ENCODE measurements at regions of chr22 and their contacts with region 1.

Region 1: DNA sequence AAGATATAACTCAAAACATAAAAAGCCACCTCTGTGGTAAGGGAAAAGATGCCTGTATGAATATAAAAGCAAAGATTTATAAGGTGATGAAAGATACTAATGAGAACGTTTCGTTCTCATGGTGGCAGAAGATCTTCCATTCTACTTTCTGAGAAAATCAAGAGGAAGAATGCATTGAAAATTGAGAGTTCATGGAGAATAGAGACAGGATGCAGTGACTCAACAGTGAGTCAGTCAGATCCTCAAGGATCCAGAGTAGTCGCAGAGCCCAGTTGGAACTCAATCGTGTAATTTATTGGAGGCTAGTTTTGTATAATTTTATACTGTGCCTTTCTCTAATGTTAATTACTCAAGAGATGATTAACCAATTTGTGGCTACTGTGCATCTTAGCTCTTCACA is 73.3 kb downstream of the ENTHD1 start:
- DNase-seq: no peak
- ATAC-seq: no peak
- H3K4me3 ChIP-seq: no peak overlapping the region
- H3K27ac ChIP-seq: no peak overlapping the region
- H3K4me1 ChIP-seq: peaks cover 2% of the 10 kb centered on the region
- H3K27me3 ChIP-seq: no peaks in the 10 kb centered on the region
- CTCF ChIP-seq: no peak
- EP300 ChIP-seq: no peak
- POLR2A ChIP-seq: no peak
- RAD21 ChIP-seq: no peak

Region 2: DNA sequence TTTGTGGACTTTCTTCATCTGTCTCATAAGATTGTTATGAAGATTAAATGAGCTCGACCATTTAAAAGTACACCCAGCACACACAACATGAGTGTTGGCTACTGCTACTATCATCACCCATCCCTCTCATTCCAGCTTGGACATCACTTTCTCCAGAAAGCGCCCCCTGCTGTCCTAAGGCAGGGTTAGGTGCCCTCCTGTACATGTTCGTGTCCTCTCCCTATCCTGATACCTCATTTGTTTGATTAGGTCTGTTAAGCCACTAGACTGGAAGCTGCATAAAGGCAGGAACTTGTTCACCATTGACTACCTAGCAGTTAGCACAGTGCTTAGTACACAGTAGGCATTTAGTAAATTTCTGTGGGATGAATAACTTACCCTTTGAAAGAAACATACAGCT is 12.2 kb before region 1 on chr22:
- CTCF ChIA-PET with region 1: interaction called, 10 read pairs
- POLR2A ChIA-PET with region 1: no interaction called
- RAD21 ChIA-PET with region 1: no interaction called
- SMC1A ChIA-PET with region 1: interaction called, 3 read pairs
- in situ Hi-C with region 1: no loop called
- intact Hi-C with region 1: no loop called
- DNase-seq: no peak
- ATAC-seq: 0 out of 3 replicates have a peak, but pooled peaks have one; percentile 34
- H3K4me3 ChIP-seq: no peak overlapping the region
- H3K27ac ChIP-seq: no peak overlapping the region
- H3K4me1 ChIP-seq: peaks cover 11% of the 10 kb centered on the region
- H3K27me3 ChIP-seq: no peaks in the 10 kb centered on the region
- CTCF ChIP-seq: peak in 2 of 3 experiments; percentile 24 to 27; a peak in 1 of 6 replicates
- EP300 ChIP-seq: no peak
- POLR2A ChIP-seq: no peak
- RAD21 ChIP-seq: 0 out of 2 replicates have a peak, but pooled peaks have one; percentile 3

Region 3: GRCh38 chr22:39832627-39833074 is 12.4 kb after region 1 on chr22:
- CTCF ChIA-PET with region 1: interaction called, 7 read pairs
- POLR2A ChIA-PET with region 1: no interaction called
- RAD21 ChIA-PET with region 1: no interaction called
- SMC1A ChIA-PET with region 1: interaction called, 14 read pairs
- in situ Hi-C with region 1: no loop called
- intact Hi-C with region 1: no loop called
- DNase-seq: no peak
- ATAC-seq: peak; percentile 71
- H3K4me3 ChIP-seq: 0 out of 2 replicates have a peak overlapping the region, but pooled peaks have one; percentile 39
- H3K27ac ChIP-seq: no peak overlapping the region
- H3K4me1 ChIP-seq: peaks cover 7% of the 10 kb centered on the region
- H3K27me3 ChIP-seq: no peaks in the 10 kb centered on the region
- CTCF ChIP-seq: no peak
- EP300 ChIP-seq: no peak
- POLR2A ChIP-seq: no peak
- RAD21 ChIP-seq: no peak